Vagina (tissue), 2 donors: ENCODE measurements at regions of chr11 and their contacts with region 1.

Region 1: DNA sequence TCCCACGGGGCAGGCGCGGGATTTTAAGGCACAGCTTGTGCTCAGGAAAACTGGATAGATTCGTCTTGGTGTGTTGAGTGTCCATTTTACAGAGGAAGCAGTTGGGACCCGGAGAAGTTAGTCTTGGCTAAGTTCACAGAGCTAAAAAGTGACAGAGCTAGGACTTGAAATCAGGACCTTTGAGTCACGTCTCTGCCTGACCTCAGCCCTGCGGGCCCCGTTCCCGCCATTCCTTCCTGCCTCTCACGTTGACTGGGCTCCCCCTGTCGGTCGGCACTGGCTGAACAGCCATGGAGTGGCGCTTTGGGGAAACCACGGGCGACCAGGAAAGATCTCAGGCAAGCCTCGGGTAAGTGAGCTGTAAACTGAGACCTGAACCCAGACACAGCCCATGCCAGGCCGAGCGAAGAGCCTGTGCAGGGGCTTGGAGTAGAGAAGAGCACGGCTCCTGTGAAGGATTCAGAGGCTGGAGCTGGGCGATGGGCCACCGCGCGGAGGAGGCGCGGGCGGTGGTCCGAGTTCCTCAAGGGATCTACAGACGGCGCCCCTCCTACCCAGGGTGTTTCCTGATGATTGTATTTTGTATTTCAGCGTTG is 54.1 kb downstream of the WNT11 start:
- DNase-seq: no peak
- H3K4me3 ChIP-seq: peak overlapping the region; percentile 34 to 41
- H3K27ac ChIP-seq: no peak overlapping the region
- H3K4me1 ChIP-seq: peaks cover 4% of the 10 kb centered on the region
- H3K27me3 ChIP-seq: no peaks in the 10 kb centered on the region
- CTCF ChIP-seq: peak; percentile 81 to 98 (median 82)
- POLR2A ChIP-seq: no peak

Region 2: GRCh38 chr11:75896843-75897419 is 255.3 kb before region 1 on chr11:
- intact Hi-C with region 1: loop called (anchors 5 kb)
- DNase-seq: no peak
- H3K4me3 ChIP-seq: no peak overlapping the region
- H3K27ac ChIP-seq: no peak overlapping the region
- H3K4me1 ChIP-seq: no peaks in the 10 kb centered on the region
- H3K27me3 ChIP-seq: no peaks in the 10 kb centered on the region
- CTCF ChIP-seq: peak; percentile 48 to 76 (median 64)
- POLR2A ChIP-seq: no peak

Region 3: GRCh38 chr11:76166314-76166713 is 14.1 kb after region 1 on chr11:
- intact Hi-C with region 1: no loop called
- DNase-seq: no peak
- H3K4me3 ChIP-seq: no peak overlapping the region
- H3K27ac ChIP-seq: no peak overlapping the region
- H3K4me1 ChIP-seq: peaks cover 10% of the 10 kb centered on the region
- H3K27me3 ChIP-seq: no peaks in the 10 kb centered on the region
- CTCF ChIP-seq: no peak
- POLR2A ChIP-seq: no peak

Region 4: GRCh38 chr11:76266270-76267090 is 114.3 kb after region 1 on chr11:
- intact Hi-C with region 1: no loop called
- DNase-seq: no peak
- H3K4me3 ChIP-seq: no peak overlapping the region
- H3K27ac ChIP-seq: peak overlapping the region; percentile 40
- H3K4me1 ChIP-seq: peaks cover 9% of the 10 kb centered on the region
- H3K27me3 ChIP-seq: no peaks in the 10 kb centered on the region
- CTCF ChIP-seq: no peak
- POLR2A ChIP-seq: no peak

Region 5: GRCh38 chr11:76480241-76480640 is 328.1 kb after region 1 on chr11:
- intact Hi-C with region 1: no loop called
- DNase-seq: no peak
- H3K4me3 ChIP-seq: no peak overlapping the region
- H3K27ac ChIP-seq: no peak overlapping the region
- H3K4me1 ChIP-seq: no peaks in the 10 kb centered on the region
- H3K27me3 ChIP-seq: no peaks in the 10 kb centered on the region
- CTCF ChIP-seq: no peak
- POLR2A ChIP-seq: no peak

Region 6: GRCh38 chr11:77287615-77288273 is 1135.6 kb after region 1 on chr11:
- intact Hi-C with region 1: loop called (anchors 10 kb)
- DNase-seq: no peak
- H3K4me3 ChIP-seq: no peak overlapping the region
- H3K27ac ChIP-seq: no peak overlapping the region
- H3K4me1 ChIP-seq: no peaks in the 10 kb centered on the region
- H3K27me3 ChIP-seq: no peaks in the 10 kb centered on the region
- CTCF ChIP-seq: no peak
- POLR2A ChIP-seq: no peak